CD4-positive, alpha-beta T cell (primary cell): ENCODE measurements at regions of chrX and their contacts with region 1.

Region 1: GRCh38 chrX:36007207-36007606 is 87.7 kb downstream of the CFAP47 start:
- DNase-seq: no peak
- ATAC-seq: no peak
- H3K4me3 ChIP-seq: no peak overlapping the region
- H3K4me3 Mint-ChIP-seq: no peak overlapping the region
- H3K27ac ChIP-seq: no peak overlapping the region
- H3K27ac Mint-ChIP-seq: no peak overlapping the region
- H3K4me1 ChIP-seq: no peaks in the 10 kb centered on the region
- H3K4me1 Mint-ChIP-seq: no peaks in the 10 kb centered on the region
- H3K27me3 ChIP-seq: no peaks in the 10 kb centered on the region
- H3K27me3 Mint-ChIP-seq: no peaks in the 10 kb centered on the region
- CTCF ChIP-seq: no peak

Region 2: GRCh38 chrX:34770511-34770910 is 1236.7 kb before region 1 on chrX:
- CTCF ChIA-PET with region 1: no interaction called
- POLR2A ChIA-PET with region 1: no interaction called
- intact Hi-C with region 1: loop called in 1 of 2 experiments (anchors 5 kb)
- DNase-seq: no peak
- ATAC-seq: no peak
- H3K4me3 ChIP-seq: no peak overlapping the region
- H3K4me3 Mint-ChIP-seq: no peak overlapping the region
- H3K27ac ChIP-seq: no peak overlapping the region
- H3K27ac Mint-ChIP-seq: no peak overlapping the region
- H3K4me1 ChIP-seq: no peaks in the 10 kb centered on the region
- H3K4me1 Mint-ChIP-seq: no peaks in the 10 kb centered on the region
- H3K27me3 ChIP-seq: no peaks in the 10 kb centered on the region
- H3K27me3 Mint-ChIP-seq: no peaks in the 10 kb centered on the region
- CTCF ChIP-seq: no peak

Region 3: DNA sequence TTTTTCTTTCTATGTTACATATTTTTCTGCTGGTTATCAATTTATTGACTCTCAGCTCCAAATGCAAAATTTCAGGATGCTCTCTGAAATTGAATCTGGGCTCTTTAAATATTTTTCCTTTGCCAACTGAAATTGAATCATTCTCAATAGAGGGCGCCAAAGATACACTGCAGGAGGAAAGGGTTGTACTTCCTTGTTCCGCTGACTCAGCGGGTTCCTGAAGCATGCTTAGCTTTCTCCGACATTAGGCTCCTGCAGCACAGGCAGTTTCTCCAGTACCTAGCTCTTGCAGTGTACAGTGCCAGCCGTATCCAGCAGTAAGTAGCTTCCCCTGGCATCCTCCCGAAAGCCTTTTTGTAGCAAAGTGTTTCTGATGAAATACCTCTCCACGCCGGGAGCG is 116.5 kb before region 1 on chrX:
- CTCF ChIA-PET with region 1: no interaction called
- POLR2A ChIA-PET with region 1: no interaction called
- intact Hi-C with region 1: no loop called
- DNase-seq: peak in 3 of 14 experiments; percentile 1 to 3 (median 2)
- ATAC-seq: no peak
- H3K4me3 ChIP-seq: no peak overlapping the region
- H3K4me3 Mint-ChIP-seq: no peak overlapping the region
- H3K27ac ChIP-seq: no peak overlapping the region
- H3K27ac Mint-ChIP-seq: no peak overlapping the region
- H3K4me1 ChIP-seq: no peaks in the 10 kb centered on the region
- H3K4me1 Mint-ChIP-seq: no peaks in the 10 kb centered on the region
- H3K27me3 ChIP-seq: no peaks in the 10 kb centered on the region
- H3K27me3 Mint-ChIP-seq: no peaks in the 10 kb centered on the region
- CTCF ChIP-seq: no peak